Posterior vena cava (tissue), 2 donors: ENCODE measurements at regions of chr17 and their contacts with region 1.

Region 1: GRCh38 chr17:34598161-34598776 is 18.9 kb downstream of the TMEM132E start:
- DNase-seq: no peak

Region 2: DNA sequence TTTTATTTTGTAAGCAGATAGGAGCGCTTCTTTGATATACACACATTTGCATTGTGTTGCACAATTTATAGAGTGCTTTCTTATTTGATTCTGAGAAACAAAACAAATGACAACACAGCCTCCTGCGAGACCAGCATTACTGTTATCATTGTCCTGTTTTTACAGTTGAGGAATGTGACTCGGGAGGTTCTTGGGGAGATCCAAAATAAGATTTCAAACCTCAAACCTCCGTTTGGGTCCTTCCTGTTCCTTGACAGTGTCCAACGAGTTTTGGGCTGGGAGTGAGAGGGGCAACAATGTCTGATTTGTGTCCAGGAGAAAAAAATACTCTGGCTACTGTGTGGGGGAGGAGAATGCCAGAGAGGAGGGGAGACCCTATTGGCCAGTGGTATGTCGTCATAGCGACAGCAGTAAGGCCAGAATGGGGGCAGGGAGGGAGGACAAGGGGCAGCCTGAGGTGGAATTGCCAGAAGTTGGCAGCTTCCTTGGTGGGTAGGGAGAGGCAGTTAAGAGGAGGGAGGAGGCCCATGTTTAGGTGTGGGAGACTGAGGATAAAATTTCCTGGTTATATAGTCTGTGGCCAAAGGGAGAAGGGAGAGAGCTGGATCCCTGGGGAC is 26.6 kb after region 1 on chr17:
- intact Hi-C with region 1: loop called in 1 of 2 experiments (anchors 1 kb)
- DNase-seq: no peak